Psoas muscle (tissue), 8 donors: ENCODE measurements at regions of chr1 and their contacts with region 1.

Region 1: DNA sequence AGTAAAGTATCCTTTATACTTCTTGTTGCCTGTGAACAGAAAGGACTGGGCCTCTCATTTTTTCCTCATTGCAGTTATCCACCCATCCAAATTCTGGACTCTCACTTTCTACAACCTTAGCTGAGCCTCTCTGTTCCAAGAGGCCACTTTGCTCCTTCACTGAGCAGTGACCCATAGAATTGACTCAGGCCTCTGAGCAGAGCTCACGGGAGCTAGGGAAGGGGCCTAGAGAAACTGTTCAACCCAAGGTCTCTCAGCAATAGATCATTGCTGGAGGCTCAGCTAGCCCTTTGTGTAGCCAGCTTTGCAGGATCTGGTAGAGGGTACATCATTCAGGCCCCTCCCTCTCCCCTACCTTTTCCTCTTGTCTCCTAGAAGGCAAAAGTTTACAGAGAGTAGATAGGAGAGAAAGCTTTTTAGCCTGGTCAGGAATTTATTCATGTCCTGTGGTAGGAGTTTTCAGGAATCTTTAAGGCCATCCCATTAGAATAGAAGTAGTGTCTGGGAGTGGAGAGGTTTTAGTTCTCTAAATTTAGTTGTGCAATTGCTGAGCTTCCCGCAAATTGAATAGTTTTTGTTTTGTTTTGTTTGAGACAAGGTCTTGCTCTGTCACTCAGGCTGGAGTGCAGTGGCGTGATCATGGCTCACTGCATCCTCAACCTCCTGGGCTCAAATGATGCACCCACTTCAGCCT is 6.7 kb downstream of the INTS3 start:
- DNase-seq: no peak
- ATAC-seq: no peak
- H3K4me3 ChIP-seq: no peak overlapping the region
- H3K27ac ChIP-seq: no peak overlapping the region
- H3K4me1 ChIP-seq: peaks cover 13% of the 10 kb centered on the region
- H3K27me3 ChIP-seq: no peaks in the 10 kb centered on the region
- CTCF ChIP-seq: no peak

Region 2: GRCh38 chr1:153796791-153797659 is 62.5 kb after region 1 on chr1:
- intact Hi-C with region 1: loop called in 1 of 2 experiments (anchors 10 kb)
- DNase-seq: peak; percentile 73 to 80
- ATAC-seq: peak; percentile 74 to 85 (median 82)
- H3K4me3 ChIP-seq: no peak overlapping the region
- H3K27ac ChIP-seq: no peak overlapping the region
- H3K4me1 ChIP-seq: no peaks in the 10 kb centered on the region
- H3K27me3 ChIP-seq: no peaks in the 10 kb centered on the region
- CTCF ChIP-seq: peak; percentile 90